ENCODE measurements at regions of chr1 and their contacts with region 1.

Region 1: GRCh38 chr1:61782771-61783170 is 40.5 kb downstream of the PATJ start:
- DNase-seq: peak; percentile 84 to 91 (median 87)
- H3K4me3 ChIP-seq: peak overlapping the region in 1 of 2 donors; percentile 4
- H3K4me3 Mint-ChIP-seq: peak overlapping the region; percentile 78 to 91 (median 84)
- H3K27ac ChIP-seq: peak overlapping the region; percentile 34
- H3K27ac Mint-ChIP-seq: peak overlapping the region; percentile 86 to 96 (median 92)
- H3K4me1 ChIP-seq: peaks cover 51% of the 10 kb centered on the region
- H3K4me1 Mint-ChIP-seq: peaks cover 39 to 67% (median 54%) of the 10 kb centered on the region in 4 donors
- H3K27me3 ChIP-seq: no peaks in the 10 kb centered on the region
- H3K27me3 Mint-ChIP-seq: no peaks in the 10 kb centered on the region

Region 2: DNA sequence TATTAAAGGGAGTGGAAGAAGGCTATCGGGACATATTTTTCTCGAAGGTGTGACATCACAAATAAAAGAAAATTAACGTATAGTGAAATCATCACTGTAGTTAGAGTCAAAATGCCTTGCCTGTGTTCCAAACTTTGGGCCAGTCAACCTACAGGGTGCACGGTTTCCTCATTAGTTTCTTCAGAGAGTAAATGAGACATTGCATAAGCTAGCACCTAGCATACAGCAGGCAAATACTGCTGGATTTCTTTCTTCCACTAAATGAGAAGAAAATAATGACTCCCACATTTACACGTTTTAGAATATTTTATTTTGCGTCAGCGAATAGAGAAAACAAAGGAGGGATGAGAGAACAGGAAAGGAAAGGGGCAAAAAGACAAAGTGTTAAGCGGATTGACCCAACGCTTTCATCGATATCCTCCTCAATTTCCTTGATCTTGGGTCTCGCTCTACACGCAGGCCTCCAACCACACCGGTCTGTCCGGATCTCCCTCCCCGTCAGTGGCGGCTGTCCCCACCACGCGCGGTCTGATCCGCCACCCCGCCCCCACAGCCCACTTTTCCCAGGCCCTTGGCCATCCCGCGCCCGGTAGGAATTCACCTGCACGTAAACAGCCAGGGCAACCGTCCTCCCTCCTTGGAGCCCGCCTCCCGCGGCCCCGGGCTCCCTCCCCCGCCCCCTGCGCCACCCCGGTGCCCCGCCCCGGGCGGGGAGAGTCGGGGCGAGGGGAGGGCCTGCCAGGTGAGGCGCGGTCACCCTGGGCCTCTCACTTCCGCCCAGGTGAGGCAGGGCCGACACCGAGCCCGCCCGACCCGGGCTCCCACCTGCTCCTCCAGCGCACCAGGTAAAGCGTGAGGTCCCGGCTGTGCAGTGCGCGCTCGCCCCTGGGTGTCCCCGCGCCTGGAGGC is 40.8 kb before region 1 on chr1 and contains the start of gene PATJ:
- CTCF ChIA-PET with region 1: interaction called, 3 read pairs
- POLR2A ChIA-PET with region 1: interaction called, 4 read pairs
- intact Hi-C with region 1: loop called (anchors 2 kb)
- DNase-seq: peak; percentile 74 to 80 (median 76)
- H3K4me3 ChIP-seq: peak within 1 kb of the TSS; percentile 69 to 83
- H3K4me3 Mint-ChIP-seq: peak within 1 kb of the TSS; percentile 94 to 98 (median 96)
- H3K27ac ChIP-seq: peak within 1 kb of the TSS; percentile 59
- H3K27ac Mint-ChIP-seq: peak within 1 kb of the TSS; percentile 92 to 97 (median 95)
- H3K4me1 ChIP-seq: peaks cover 25% of the 10 kb centered on the region
- H3K4me1 Mint-ChIP-seq: peaks cover 24 to 37% (median 29%) of the 10 kb centered on the region in 4 donors
- H3K27me3 ChIP-seq: no peaks in the 10 kb centered on the region
- H3K27me3 Mint-ChIP-seq: no peaks in the 10 kb centered on the region
- total RNA-seq, gene PATJ: 38.9 to 49.0 TPM